ENCODE measurements at regions of chr9 and their contacts with region 1.

Region 1: GRCh38 chr9:92138157-92138959 is 23.1 kb upstream of the SPTLC1 start:
- DNase-seq: peak; percentile 78
- H3K4me3 Mint-ChIP-seq: no peak overlapping the region
- H3K27ac Mint-ChIP-seq: no peak overlapping the region
- H3K4me1 Mint-ChIP-seq: no peaks in the 10 kb centered on the region
- H3K27me3 Mint-ChIP-seq: peaks cover 39% of the 10 kb centered on the region
- CTCF ChIP-seq: peak; percentile 80

Region 2: DNA sequence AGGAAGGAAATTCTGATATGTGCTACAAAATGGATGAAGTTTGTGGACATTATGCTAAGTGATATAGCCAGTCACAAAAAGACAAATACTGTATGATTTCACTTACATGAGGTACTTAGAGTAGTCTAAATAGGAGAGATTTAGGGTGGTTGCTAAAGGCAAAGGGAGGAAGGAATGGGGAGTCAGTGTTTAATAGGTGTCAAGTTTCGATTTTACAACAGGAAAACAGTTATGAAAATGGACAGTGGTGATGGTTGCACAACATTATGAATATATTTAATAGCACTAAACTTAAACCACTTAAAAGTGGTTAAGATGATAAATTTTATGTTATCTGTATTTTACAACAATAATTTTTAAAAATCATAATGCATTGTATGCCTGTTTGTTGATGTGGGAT is 437.8 kb after region 1 on chr9:
- CTCF ChIA-PET with region 1: no interaction called
- intact Hi-C with region 1: no loop called
- DNase-seq: no peak
- H3K4me3 Mint-ChIP-seq: no peak overlapping the region
- H3K27ac Mint-ChIP-seq: no peak overlapping the region
- H3K4me1 Mint-ChIP-seq: no peaks in the 10 kb centered on the region
- H3K27me3 Mint-ChIP-seq: no peaks in the 10 kb centered on the region
- CTCF ChIP-seq: no peak

Region 3: GRCh38 chr9:92634712-92635605 is 496.6 kb after region 1 on chr9:
- CTCF ChIA-PET with region 1: no interaction called
- intact Hi-C with region 1: loop called (anchors 5 kb)
- DNase-seq: peak; percentile 68
- H3K4me3 Mint-ChIP-seq: no peak overlapping the region
- H3K27ac Mint-ChIP-seq: no peak overlapping the region
- H3K4me1 Mint-ChIP-seq: no peaks in the 10 kb centered on the region
- H3K27me3 Mint-ChIP-seq: no peaks in the 10 kb centered on the region
- CTCF ChIP-seq: peak; percentile 79

Measured in Calu3 (cell line).